Activated CD8-positive, alpha-beta memory T cell treated with anti-CD3 and anti-CD28 coated beads, Interleukin-2, amount 10 ng/mL, durations not matched to agents 7 days and 5 days (primary cell): ENCODE measurements at regions of chr7 and their contacts with region 1.

Region 1: GRCh38 chr7:137898839-137899721 is 52.3 kb upstream of the DGKI start:
- DNase-seq: peak; percentile 85
- ATAC-seq: peak; percentile 91
- H3K4me3 Mint-ChIP-seq: peak overlapping the region; percentile 36
- H3K27ac Mint-ChIP-seq: peak overlapping the region; percentile 49
- H3K4me1 Mint-ChIP-seq: peaks cover 40% of the 10 kb centered on the region
- H3K27me3 Mint-ChIP-seq: no peaks in the 10 kb centered on the region

Region 2: GRCh38 chr7:137169282-137169698 is 729.8 kb before region 1 on chr7:
- CTCF ChIA-PET with region 1: no interaction called
- DNase-seq: no peak
- ATAC-seq: no peak
- H3K4me3 Mint-ChIP-seq: no peak overlapping the region
- H3K27ac Mint-ChIP-seq: no peak overlapping the region
- H3K4me1 Mint-ChIP-seq: no peaks in the 10 kb centered on the region
- H3K27me3 Mint-ChIP-seq: no peaks in the 10 kb centered on the region

Region 3: GRCh38 chr7:137656227-137656849 is 242.7 kb before region 1 on chr7:
- CTCF ChIA-PET with region 1: interaction called, 25 read pairs
- DNase-seq: peak; percentile 73
- ATAC-seq: peak; percentile 47
- H3K4me3 Mint-ChIP-seq: no peak overlapping the region
- H3K27ac Mint-ChIP-seq: no peak overlapping the region
- H3K4me1 Mint-ChIP-seq: no peaks in the 10 kb centered on the region
- H3K27me3 Mint-ChIP-seq: peaks cover 9% of the 10 kb centered on the region

Region 4: GRCh38 chr7:137920637-137921399 is 21.7 kb after region 1 on chr7:
- CTCF ChIA-PET with region 1: interaction called, 18 read pairs
- DNase-seq: no peak
- ATAC-seq: no peak
- H3K4me3 Mint-ChIP-seq: no peak overlapping the region
- H3K27ac Mint-ChIP-seq: no peak overlapping the region
- H3K4me1 Mint-ChIP-seq: peaks cover 25% of the 10 kb centered on the region
- H3K27me3 Mint-ChIP-seq: no peaks in the 10 kb centered on the region

Region 5: DNA sequence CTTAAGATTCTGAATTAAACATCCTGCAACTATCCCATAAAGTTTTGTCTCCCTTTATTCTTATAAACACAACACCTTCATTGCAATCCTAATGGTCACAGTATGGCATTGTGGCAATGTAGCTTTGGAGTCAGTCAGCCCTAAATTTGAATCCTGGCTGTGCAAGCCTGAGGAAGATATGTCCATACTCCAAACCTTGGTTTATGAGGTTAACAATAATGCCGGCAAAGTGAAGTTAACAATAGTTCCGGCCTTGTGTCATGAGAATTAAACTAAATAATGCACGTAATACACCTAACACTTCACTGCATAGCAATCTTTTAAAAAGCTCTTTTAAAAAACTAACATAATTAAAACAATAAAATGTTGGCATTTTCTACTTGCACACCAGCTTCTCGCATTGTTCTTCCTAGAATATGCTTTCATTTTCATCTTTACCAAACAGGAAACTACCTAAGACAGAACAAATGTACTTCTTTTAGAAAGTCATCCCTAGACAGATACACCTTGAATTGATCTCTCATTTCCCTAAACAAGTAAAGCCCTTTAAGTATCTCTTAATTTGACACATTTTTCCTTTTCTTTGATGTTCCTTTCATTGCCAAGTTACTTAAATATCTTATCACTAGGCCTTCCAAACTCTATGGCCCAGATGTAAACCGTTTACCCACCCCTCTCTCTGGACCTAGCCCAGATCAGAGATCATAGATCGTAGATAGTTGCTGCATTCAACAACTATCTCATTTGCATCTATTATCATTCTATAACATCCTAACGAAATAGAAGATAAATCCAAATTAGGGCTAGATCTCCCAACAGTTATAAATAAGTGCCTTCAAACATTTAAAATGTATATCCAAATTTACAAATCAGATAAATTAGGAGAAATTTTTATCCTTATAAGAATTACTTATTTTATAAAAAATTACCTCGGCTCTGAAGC is 36.1 kb after region 1 on chr7:
- CTCF ChIA-PET with region 1: interaction called, 10 read pairs
- DNase-seq: no peak
- ATAC-seq: peak; percentile 88
- H3K4me3 Mint-ChIP-seq: peak overlapping the region; percentile 79
- H3K27ac Mint-ChIP-seq: peak overlapping the region; percentile 94
- H3K4me1 Mint-ChIP-seq: peaks cover 33% of the 10 kb centered on the region
- H3K27me3 Mint-ChIP-seq: no peaks in the 10 kb centered on the region

Region 6: GRCh38 chr7:138002096-138002827 is 103.2 kb after region 1 on chr7:
- CTCF ChIA-PET with region 1: interaction called, 256 read pairs
- DNase-seq: peak; percentile 99
- ATAC-seq: peak; percentile 96
- H3K4me3 Mint-ChIP-seq: peak overlapping the region; percentile 87
- H3K27ac Mint-ChIP-seq: peak overlapping the region; percentile 94
- H3K4me1 Mint-ChIP-seq: peaks cover 30% of the 10 kb centered on the region
- H3K27me3 Mint-ChIP-seq: no peaks in the 10 kb centered on the region